GM10248 (cell line): ENCODE measurements at regions of chr15 and their contacts with region 1.

Region 1: GRCh38 chr15:77285057-77285997 is 134.6 kb downstream of the PEAK1 start:
- DNase-seq: no peak
- CTCF ChIP-seq: no peak

Region 2: DNA sequence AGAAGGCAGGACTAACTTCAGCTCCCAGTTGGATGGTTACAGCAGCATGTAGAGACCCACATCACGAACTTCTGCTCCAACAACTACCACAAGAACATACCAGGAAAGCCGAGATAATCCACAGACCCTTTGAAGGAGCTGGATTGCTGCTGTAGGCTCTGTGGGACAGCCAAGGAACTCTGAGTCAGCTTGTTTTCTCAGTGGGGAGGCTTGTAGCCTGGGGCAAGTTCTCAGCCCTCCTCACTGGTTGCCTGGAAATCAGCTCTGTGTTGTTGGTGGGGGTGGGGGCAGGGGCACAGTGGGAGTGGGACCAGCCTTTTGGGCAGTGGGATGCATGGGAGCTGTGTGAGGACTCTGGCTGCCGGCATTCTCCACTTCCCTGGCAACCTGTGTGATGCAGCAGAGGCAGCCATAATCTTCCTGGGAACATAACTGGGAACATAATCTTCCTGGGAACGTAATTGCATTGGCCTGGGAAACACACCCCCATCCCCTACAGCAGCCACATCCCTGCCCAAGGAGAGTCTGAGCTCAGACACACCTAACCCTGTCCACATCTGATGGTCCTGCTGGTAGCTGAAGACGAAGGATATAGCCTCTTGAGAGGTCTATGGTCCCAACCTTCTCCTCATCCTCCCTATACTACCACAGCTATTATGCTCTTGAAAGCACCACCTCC is 18.5 kb before region 1 on chr15:
- CTCF ChIA-PET with region 1: no interaction called
- POLR2A ChIA-PET with region 1: no interaction called
- DNase-seq: no peak
- CTCF ChIP-seq: no peak

Region 3: GRCh38 chr15:77295446-77295845 is 10.1 kb after region 1 on chr15:
- CTCF ChIA-PET with region 1: interaction called, 12 read pairs
- POLR2A ChIA-PET with region 1: no interaction called
- DNase-seq: no peak
- CTCF ChIP-seq: no peak